ENCODE measurements at regions of chrX and their contacts with region 1.

Region 1: GRCh38 chrX:103845165-103845653 is 13.2 kb upstream of the RAB9B start:
- DNase-seq: peak; percentile 52 to 56
- ATAC-seq: peak in 2 of 4 donors; percentile 54 to 76
- H3K4me3 ChIP-seq: no peak overlapping the region
- H3K27ac ChIP-seq: no peak overlapping the region
- H3K4me1 ChIP-seq: no peaks in the 10 kb centered on the region
- H3K27me3 ChIP-seq: peaks cover 0 to 10% (median 0%) of the 10 kb centered on the region in 3 donors
- CTCF ChIP-seq: peak; percentile 64

Region 2: DNA sequence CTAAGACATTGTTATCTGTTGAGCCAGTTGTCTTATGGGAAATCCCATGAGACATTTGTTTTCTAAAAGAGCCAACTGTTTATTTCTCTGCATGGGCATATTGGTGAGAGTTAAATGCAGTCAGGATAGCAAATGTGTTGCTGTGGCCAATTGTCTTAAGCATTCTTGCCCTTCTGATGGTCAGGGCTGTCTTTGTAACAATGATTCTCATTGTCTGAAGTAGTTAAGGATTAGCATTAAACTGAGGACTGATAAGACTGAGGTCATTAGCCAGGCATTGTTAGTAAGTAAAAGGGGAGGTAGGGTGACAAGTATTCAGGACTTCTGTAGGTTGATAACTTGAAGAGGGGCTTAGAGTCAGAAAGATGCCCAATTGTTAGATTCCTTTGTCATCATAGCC is 147.5 kb before region 1 on chrX:
- intact Hi-C with region 1: no loop called
- DNase-seq: no peak
- ATAC-seq: no peak
- H3K4me3 ChIP-seq: no peak overlapping the region
- H3K27ac ChIP-seq: no peak overlapping the region
- H3K4me1 ChIP-seq: no peaks in the 10 kb centered on the region
- H3K27me3 ChIP-seq: peaks cover 0 to 9% (median 0%) of the 10 kb centered on the region in 3 donors
- CTCF ChIP-seq: no peak

Region 3: DNA sequence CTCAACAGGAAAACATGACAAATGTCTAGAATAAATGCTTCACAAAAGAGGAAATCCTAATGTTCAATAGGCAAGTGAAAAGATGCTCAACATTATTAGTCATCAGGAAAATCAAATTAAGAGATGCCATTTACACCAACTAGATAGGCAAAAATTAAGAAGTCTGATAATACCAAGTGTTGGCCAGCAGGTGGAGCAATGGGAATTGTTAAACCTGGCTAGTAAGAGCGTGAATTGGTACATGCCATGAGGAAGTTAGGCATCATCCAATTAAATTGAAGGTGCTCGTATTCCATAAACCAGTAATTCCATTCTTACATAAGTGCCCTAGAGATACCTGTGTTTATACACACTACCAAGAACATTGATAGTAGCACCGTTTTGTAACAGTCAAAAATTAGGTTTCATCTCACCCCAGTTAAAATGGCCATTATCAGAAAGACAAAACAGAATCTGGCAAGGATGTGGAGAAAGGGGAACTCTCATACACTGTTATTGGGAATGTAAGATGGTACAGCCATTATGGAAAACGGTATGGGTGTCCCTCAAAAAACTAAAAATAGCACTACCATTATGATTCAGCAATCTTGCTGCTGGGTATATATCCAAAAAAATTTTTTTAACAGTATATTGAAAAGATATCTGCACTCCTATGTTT is 253.1 kb after region 1 on chrX:
- intact Hi-C with region 1: no loop called
- DNase-seq: no peak
- ATAC-seq: peak in 2 of 4 donors; percentile 70 to 75
- H3K4me3 ChIP-seq: no peak overlapping the region
- H3K27ac ChIP-seq: no peak overlapping the region
- H3K4me1 ChIP-seq: no peaks in the 10 kb centered on the region
- H3K27me3 ChIP-seq: peaks cover 0 to 60% (median 0%) of the 10 kb centered on the region in 3 donors
- CTCF ChIP-seq: peak; percentile 71

Region 4: GRCh38 chrX:104130808-104131207 is 285.6 kb after region 1 on chrX:
- intact Hi-C with region 1: loop called (anchors 5 to 10 kb)
- DNase-seq: no peak
- ATAC-seq: peak in 2 of 4 donors; percentile 58 to 67
- H3K4me3 ChIP-seq: no peak overlapping the region
- H3K27ac ChIP-seq: no peak overlapping the region
- H3K4me1 ChIP-seq: no peaks in the 10 kb centered on the region
- H3K27me3 ChIP-seq: peaks cover 0 to 12% (median 0%) of the 10 kb centered on the region in 3 donors
- CTCF ChIP-seq: no peak

Region 5: GRCh38 chrX:104136241-104137019 is 291.2 kb after region 1 on chrX:
- intact Hi-C with region 1: loop called (anchors 5 to 10 kb)
- DNase-seq: peak; percentile 23 to 54
- ATAC-seq: peak; percentile 77 to 97 (median 87)
- H3K4me3 ChIP-seq: peak overlapping the region; percentile 53
- H3K27ac ChIP-seq: no peak overlapping the region
- H3K4me1 ChIP-seq: no peaks in the 10 kb centered on the region
- H3K27me3 ChIP-seq: peaks cover 0 to 12% (median 0%) of the 10 kb centered on the region in 3 donors
- CTCF ChIP-seq: peak; percentile 81